GM12878 (cell line): ENCODE measurements at regions of chr18 and their contacts with region 1.

Region 1: DNA sequence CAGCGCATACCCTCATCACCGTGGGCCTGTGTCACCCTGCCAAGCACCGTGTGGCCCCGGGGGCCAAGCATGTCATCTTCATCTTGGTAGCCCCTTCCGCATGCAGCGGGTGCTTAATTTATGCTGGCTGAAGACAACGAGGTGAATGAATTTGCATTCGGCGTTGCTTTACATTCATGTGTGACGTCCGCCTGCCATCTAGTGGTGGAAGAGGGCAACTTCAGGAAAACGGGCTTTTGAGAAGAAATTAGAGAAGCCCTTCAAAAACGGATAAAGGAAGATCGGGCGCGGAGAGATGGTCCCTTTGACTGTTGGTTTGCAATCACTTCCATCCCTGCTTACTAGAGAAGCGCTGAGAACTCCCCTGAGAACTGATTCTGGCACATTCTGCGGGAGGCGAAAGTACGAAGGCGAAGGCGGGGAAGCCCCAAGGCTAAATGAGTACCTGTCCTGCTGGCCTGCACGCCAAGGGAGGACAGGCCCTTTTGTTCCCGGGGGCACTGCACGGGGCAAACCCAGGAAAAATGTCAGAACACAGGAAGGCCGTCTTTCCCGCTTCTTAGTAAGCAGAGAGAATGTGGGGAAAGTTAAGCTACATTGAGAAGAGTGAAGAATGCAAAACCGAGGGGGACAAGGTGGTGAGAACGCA is 145.9 kb downstream of the ZNF516 start:
- DNase-seq: no peak
- ATAC-seq: peak; percentile 82
- H3K4me3 ChIP-seq: no peak overlapping the region; the same call in 1 of the 2 replicates
- H3K27ac ChIP-seq: no peak overlapping the region
- H3K4me1 ChIP-seq: no peaks in the 10 kb centered on the region
- H3K27me3 ChIP-seq: no peaks in the 10 kb centered on the region
- CTCF ChIP-seq: peak; percentile 84 to 93 (median 91)
- EP300 ChIP-seq: no peak
- POLR2A ChIP-seq: no peak
- RAD21 ChIP-seq: peak; percentile 95

Region 2: DNA sequence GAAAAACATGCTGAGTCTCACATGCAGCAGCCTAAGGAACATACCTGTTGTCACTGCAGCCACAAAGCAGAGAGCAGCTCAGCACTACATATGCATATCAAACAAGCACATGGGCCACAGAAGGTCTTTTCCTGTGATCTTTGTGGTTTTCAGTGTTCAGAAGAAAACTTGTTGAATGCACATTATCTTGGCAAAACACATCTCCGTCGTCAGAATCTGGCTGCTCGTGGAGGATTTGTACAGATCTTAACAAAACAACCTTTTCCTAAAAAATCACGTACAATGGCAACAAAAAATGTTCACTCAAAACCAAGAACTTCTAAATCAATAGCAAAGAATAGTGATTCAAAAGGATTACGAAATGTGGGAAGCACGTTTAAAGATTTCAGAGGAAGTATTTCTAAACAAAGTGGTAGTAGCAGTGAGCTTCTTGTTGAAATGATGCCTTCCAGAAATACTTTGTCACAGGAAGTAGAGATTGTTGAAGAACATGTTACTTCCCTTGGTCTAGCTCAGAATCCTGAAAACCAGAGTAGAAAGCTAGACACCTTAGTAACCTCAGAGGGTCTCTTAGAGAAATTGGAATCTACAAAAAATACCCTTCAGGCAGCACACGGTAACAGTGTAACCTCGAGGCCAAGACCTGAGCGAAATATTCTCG is 1717.4 kb before region 1 on chr18:
- CTCF ChIA-PET with region 1: no interaction called
- POLR2A ChIA-PET with region 1: no interaction called
- RAD21 ChIA-PET with region 1: no interaction called
- SMC1A ChIA-PET with region 1: no interaction called
- in situ Hi-C with region 1: loop called (anchors 25 kb)
- intact Hi-C with region 1: no loop called
- DNase-seq: no peak
- ATAC-seq: no peak
- H3K4me3 ChIP-seq: no peak overlapping the region
- H3K27ac ChIP-seq: no peak overlapping the region
- H3K4me1 ChIP-seq: no peaks in the 10 kb centered on the region
- H3K27me3 ChIP-seq: no peaks in the 10 kb centered on the region
- CTCF ChIP-seq: no peak
- EP300 ChIP-seq: no peak
- POLR2A ChIP-seq: no peak
- RAD21 ChIP-seq: no peak

Region 3: GRCh38 chr18:74652392-74652988 is 1696.7 kb before region 1 on chr18:
- CTCF ChIA-PET with region 1: no interaction called
- POLR2A ChIA-PET with region 1: no interaction called
- RAD21 ChIA-PET with region 1: no interaction called
- SMC1A ChIA-PET with region 1: no interaction called
- in situ Hi-C with region 1: loop called (anchors 25 kb)
- intact Hi-C with region 1: loop called (anchors 10 kb)
- DNase-seq: no peak
- ATAC-seq: peak; percentile 85
- H3K4me3 ChIP-seq: no peak overlapping the region
- H3K27ac ChIP-seq: no peak overlapping the region
- H3K4me1 ChIP-seq: no peaks in the 10 kb centered on the region
- H3K27me3 ChIP-seq: no peaks in the 10 kb centered on the region
- CTCF ChIP-seq: peak; percentile 30 to 62 (median 58); a peak in 4 of 6 replicates
- EP300 ChIP-seq: no peak
- POLR2A ChIP-seq: no peak
- RAD21 ChIP-seq: peak; percentile 78

Region 4: DNA sequence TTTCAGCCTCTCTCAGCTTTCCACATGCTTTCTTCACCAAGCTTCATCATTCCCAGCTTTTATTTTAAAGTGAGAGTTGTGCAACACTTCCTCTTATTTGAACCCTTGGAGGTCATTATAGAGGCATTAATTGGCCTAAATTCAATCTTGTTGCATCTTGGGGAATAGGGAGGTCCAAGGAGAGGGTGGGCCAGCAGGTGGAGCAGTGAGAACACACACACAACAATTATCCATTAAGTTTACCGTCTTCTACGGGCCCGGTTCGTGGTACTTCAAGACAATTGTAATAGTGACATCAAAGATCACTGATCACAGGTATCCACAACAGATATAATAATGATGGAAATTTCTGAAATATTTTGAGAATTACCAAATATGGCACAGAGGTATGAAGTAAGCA is 464.5 kb before region 1 on chr18:
- CTCF ChIA-PET with region 1: no interaction called
- POLR2A ChIA-PET with region 1: no interaction called
- RAD21 ChIA-PET with region 1: no interaction called
- SMC1A ChIA-PET with region 1: no interaction called
- in situ Hi-C with region 1: no loop called
- intact Hi-C with region 1: loop called (anchors 2 kb)
- DNase-seq: no peak
- ATAC-seq: no peak
- H3K4me3 ChIP-seq: no peak overlapping the region
- H3K27ac ChIP-seq: no peak overlapping the region
- H3K4me1 ChIP-seq: no peaks in the 10 kb centered on the region
- H3K27me3 ChIP-seq: no peaks in the 10 kb centered on the region
- CTCF ChIP-seq: peak in 2 of 3 experiments; percentile 6 to 7; a peak in 2 of 6 replicates
- EP300 ChIP-seq: no peak
- POLR2A ChIP-seq: no peak
- RAD21 ChIP-seq: no peak

Region 5: GRCh38 chr18:76169733-76170132 is 179.5 kb before region 1 on chr18:
- CTCF ChIA-PET with region 1: interaction called, 4 read pairs
- POLR2A ChIA-PET with region 1: no interaction called
- RAD21 ChIA-PET with region 1: no interaction called
- SMC1A ChIA-PET with region 1: no interaction called
- in situ Hi-C with region 1: no loop called
- intact Hi-C with region 1: loop called (anchors 1 kb)
- DNase-seq: no peak
- ATAC-seq: peak; percentile 56
- H3K4me3 ChIP-seq: no peak overlapping the region
- H3K27ac ChIP-seq: no peak overlapping the region
- H3K4me1 ChIP-seq: no peaks in the 10 kb centered on the region
- H3K27me3 ChIP-seq: no peaks in the 10 kb centered on the region; a peak in 1 of 4 replicates
- CTCF ChIP-seq: peak; percentile 40 to 58 (median 58)
- EP300 ChIP-seq: no peak
- POLR2A ChIP-seq: no peak
- RAD21 ChIP-seq: 0 out of 2 replicates have a peak, but pooled peaks have one; percentile 18